ENCODE measurements at regions of chr3 and their contacts with region 1.

Region 1: DNA sequence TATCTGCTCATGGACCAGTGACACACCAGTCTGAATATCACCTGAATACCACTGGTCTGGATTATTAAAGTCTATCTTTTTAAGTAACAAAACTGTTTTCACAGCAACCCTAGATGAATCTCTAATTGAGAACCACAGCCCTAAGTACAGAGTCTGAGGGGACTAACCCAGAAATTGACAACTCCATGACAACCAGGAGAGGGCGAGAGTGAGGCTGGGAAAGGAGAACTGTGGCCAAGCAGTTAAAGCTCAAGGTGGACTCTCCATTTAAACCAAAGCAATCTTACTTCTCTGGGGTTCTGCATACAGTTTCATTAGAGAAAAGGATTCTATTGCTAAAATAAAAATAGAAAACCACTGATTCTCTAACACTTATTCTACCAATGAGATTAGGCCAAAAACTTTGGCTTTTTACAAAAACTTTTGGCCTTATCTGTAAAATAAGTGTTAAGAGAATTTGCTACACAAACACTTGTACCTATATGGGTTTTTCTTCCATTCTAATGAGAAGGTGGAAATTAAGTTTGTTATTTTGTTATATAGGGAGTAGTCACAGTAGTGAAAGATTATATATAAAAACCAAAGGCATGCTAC is 11.4 kb downstream of the NEK10 start:
- DNase-seq: peak; percentile 61
- ATAC-seq: peak; percentile 89
- H3K4me3 Mint-ChIP-seq: no peak overlapping the region
- H3K27ac Mint-ChIP-seq: no peak overlapping the region
- H3K4me1 Mint-ChIP-seq: peaks cover 39% of the 10 kb centered on the region
- H3K27me3 Mint-ChIP-seq: no peaks in the 10 kb centered on the region; the same call in 1 of the 2 replicates
- CTCF ChIP-seq: no peak

Region 2: GRCh38 chr3:27345492-27345891 is 12.3 kb before region 1 on chr3:
- CTCF ChIA-PET with region 1: interaction called, 11 read pairs
- POLR2A ChIA-PET with region 1: no interaction called
- DNase-seq: no peak
- ATAC-seq: no peak
- H3K4me3 Mint-ChIP-seq: no peak overlapping the region
- H3K27ac Mint-ChIP-seq: no peak overlapping the region
- H3K4me1 Mint-ChIP-seq: peaks cover 2% of the 10 kb centered on the region; the same call in 1 of the 2 replicates
- H3K27me3 Mint-ChIP-seq: no peaks in the 10 kb centered on the region
- CTCF ChIP-seq: no peak

Region 3: GRCh38 chr3:27368831-27369607 is 11.3 kb after region 1 on chr3 and contains the start of gene NEK10:
- CTCF ChIA-PET with region 1: interaction called, 15 read pairs
- POLR2A ChIA-PET with region 1: interaction called, 4 read pairs
- DNase-seq: peak; percentile 97
- ATAC-seq: peak; percentile 98
- H3K4me3 Mint-ChIP-seq: peak within 1 kb of the TSS; percentile 91
- H3K27ac Mint-ChIP-seq: peak within 1 kb of the TSS; percentile 73; the same call in 1 of the 2 replicates
- H3K4me1 Mint-ChIP-seq: peaks cover 11% of the 10 kb centered on the region
- H3K27me3 Mint-ChIP-seq: peaks cover 11% of the 10 kb centered on the region
- CTCF ChIP-seq: no peak
- total RNA-seq, gene NEK10: 0.37 to 1.4 TPM (median 0.73 TPM) in 3 replicates

Measured in WTC11 (cell line).